Caco-2 (cell line): ENCODE measurements at regions of chr15 and their contacts with region 1.

Region 1: DNA sequence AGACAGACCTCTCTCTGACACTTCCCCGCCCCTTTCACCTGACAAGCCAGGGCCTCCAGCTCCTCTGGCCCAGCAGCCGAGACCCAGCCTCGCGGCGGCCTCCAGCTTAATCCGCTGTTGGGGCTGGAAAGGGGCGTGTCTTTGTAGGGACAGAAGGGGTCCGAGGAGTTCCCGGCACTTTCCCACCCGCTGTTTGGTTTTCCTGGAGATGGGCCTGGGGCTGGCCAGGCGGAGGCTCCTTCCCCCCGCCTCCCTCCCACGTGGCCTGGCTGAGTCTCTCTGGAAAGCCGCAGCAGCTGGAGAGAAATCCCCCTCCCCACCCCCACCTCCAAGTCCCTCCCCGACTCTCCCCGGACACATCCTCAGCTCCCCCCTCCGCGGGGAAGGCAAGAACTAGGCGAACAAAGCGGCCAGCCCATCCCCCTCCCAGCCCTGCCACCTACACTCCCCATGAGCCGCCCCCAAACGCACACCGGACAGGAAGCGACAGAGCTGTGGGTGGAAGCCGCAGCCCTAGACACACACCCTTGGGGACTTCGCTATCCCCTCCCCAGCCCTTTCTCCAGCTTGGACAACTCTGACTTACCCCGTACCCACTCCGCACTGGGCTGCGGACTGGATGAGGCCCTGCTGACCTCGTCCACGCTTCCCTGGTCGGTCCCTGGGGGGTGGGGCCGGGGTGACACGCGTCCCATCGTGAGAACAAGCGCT is 1.2 kb downstream of the IGDCC4 start:
- DNase-seq: peak; percentile 36 to 56
- H3K4me3 ChIP-seq: peak overlapping the region; percentile 84
- H3K4me3 Mint-ChIP-seq: peak overlapping the region; percentile 83
- H3K27ac Mint-ChIP-seq: peak overlapping the region; percentile 48
- H3K4me1 ChIP-seq: peaks cover 19% of the 10 kb centered on the region
- H3K4me1 Mint-ChIP-seq: peaks cover 26% of the 10 kb centered on the region
- H3K27me3 ChIP-seq: no peaks in the 10 kb centered on the region
- H3K27me3 Mint-ChIP-seq: no peaks in the 10 kb centered on the region
- CTCF ChIP-seq: no peak

Region 2: GRCh38 chr15:65431731-65432130 is 10.2 kb after region 1 on chr15:
- CTCF ChIA-PET with region 1: interaction called, 10 read pairs
- POLR2A ChIA-PET with region 1: no interaction called
- intact Hi-C with region 1: no loop called
- DNase-seq: no peak
- H3K4me3 ChIP-seq: no peak overlapping the region
- H3K4me3 Mint-ChIP-seq: no peak overlapping the region
- H3K27ac Mint-ChIP-seq: no peak overlapping the region
- H3K4me1 ChIP-seq: no peaks in the 10 kb centered on the region
- H3K4me1 Mint-ChIP-seq: no peaks in the 10 kb centered on the region
- H3K27me3 ChIP-seq: no peaks in the 10 kb centered on the region; the same call in 1 of the 2 replicates
- H3K27me3 Mint-ChIP-seq: no peaks in the 10 kb centered on the region
- CTCF ChIP-seq: no peak

Region 3: DNA sequence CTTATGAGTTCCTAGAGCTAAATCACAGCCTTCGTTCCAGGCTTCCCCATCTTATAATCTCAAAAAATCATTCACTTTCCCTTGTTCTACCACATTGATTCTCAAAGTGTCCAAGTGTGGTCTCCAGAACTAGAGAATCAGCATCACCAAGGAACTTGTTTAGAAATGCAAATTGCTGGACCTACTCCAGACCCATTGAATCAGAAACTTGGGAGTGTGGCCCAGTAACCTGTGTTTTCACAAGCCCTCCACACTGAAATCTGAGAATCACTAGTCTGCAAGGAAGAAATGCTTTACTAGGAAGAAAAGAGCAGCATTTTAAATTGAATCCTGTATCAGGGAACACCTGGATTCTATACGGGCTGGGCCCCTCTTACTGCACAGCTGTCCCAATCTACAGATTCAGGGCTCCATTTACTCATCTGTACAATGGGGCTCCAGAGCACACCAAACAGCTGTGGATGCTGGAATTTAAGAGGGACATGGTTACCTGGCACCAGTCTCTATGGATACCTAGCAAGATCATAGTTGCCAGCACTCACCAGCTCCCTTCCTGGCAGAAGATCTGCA is 828.2 kb after region 1 on chr15:
- CTCF ChIA-PET with region 1: no interaction called
- POLR2A ChIA-PET with region 1: no interaction called
- intact Hi-C with region 1: no loop called
- DNase-seq: no peak
- H3K4me3 ChIP-seq: no peak overlapping the region
- H3K4me3 Mint-ChIP-seq: no peak overlapping the region
- H3K27ac Mint-ChIP-seq: no peak overlapping the region
- H3K4me1 ChIP-seq: no peaks in the 10 kb centered on the region
- H3K4me1 Mint-ChIP-seq: peaks cover 9% of the 10 kb centered on the region
- H3K27me3 ChIP-seq: no peaks in the 10 kb centered on the region
- H3K27me3 Mint-ChIP-seq: peaks cover 31% of the 10 kb centered on the region
- CTCF ChIP-seq: no peak